H1 (cell line): ENCODE measurements at regions of chr9 and their contacts with region 1.

Region 1: GRCh38 chr9:123401879-123402513 is 46.0 kb downstream of the CRB2 start:
- DNase-seq: no peak
- H3K4me3 ChIP-seq: no peak overlapping the region
- H3K27ac ChIP-seq: no peak overlapping the region
- H3K4me1 ChIP-seq: peaks cover 0 to 11% (median 9%) of the 10 kb centered on the region in 4 experiments; a peak in 6 of 7 replicates
- H3K27me3 ChIP-seq: no peaks in the 10 kb centered on the region; a peak in 1 of 7 replicates
- CTCF ChIP-seq: peak; percentile 57 to 90 (median 73)
- EP300 ChIP-seq: no peak
- POLR2A ChIP-seq: no peak
- RAD21 ChIP-seq: peak; percentile 89 to 93

Region 2: GRCh38 chr9:123389070-123389469 is 12.9 kb before region 1 on chr9:
- CTCF ChIA-PET with region 1: interaction called, 14 read pairs
- POLR2A ChIA-PET with region 1: interaction called, 3 read pairs
- DNase-seq: no peak
- H3K4me3 ChIP-seq: no peak overlapping the region
- H3K27ac ChIP-seq: no peak overlapping the region
- H3K4me1 ChIP-seq: peaks cover 0 to 8% (median 5%) of the 10 kb centered on the region in 4 experiments; a peak in 5 of 7 replicates
- H3K27me3 ChIP-seq: no peaks in the 10 kb centered on the region; a peak in 1 of 7 replicates
- CTCF ChIP-seq: no peak
- EP300 ChIP-seq: no peak
- POLR2A ChIP-seq: no peak
- RAD21 ChIP-seq: no peak

Region 3: GRCh38 chr9:123420592-123421111 is 18.7 kb after region 1 on chr9:
- CTCF ChIA-PET with region 1: interaction called, 15 read pairs
- POLR2A ChIA-PET with region 1: no interaction called
- DNase-seq: no peak
- H3K4me3 ChIP-seq: no peak overlapping the region
- H3K27ac ChIP-seq: no peak overlapping the region
- H3K4me1 ChIP-seq: peaks cover 5 to 14% (median 11%) of the 10 kb centered on the region in 4 experiments
- H3K27me3 ChIP-seq: no peaks in the 10 kb centered on the region
- CTCF ChIP-seq: no peak
- EP300 ChIP-seq: no peak
- POLR2A ChIP-seq: no peak
- RAD21 ChIP-seq: no peak

Region 4: GRCh38 chr9:123434619-123435528 is 32.9 kb after region 1 on chr9:
- CTCF ChIA-PET with region 1: interaction called, 17 read pairs
- POLR2A ChIA-PET with region 1: interaction called, 5 read pairs
- DNase-seq: peak; percentile 33 to 67
- H3K4me3 ChIP-seq: no peak overlapping the region
- H3K27ac ChIP-seq: no peak overlapping the region
- H3K4me1 ChIP-seq: peaks cover 0 to 8% (median 2%) of the 10 kb centered on the region in 4 experiments; a peak in 4 of 7 replicates
- H3K27me3 ChIP-seq: no peaks in the 10 kb centered on the region; a peak in 1 of 7 replicates
- CTCF ChIP-seq: peak; percentile 57 to 70 (median 67)
- EP300 ChIP-seq: no peak
- POLR2A ChIP-seq: no peak
- RAD21 ChIP-seq: peak; percentile 51 to 60

Region 5: DNA sequence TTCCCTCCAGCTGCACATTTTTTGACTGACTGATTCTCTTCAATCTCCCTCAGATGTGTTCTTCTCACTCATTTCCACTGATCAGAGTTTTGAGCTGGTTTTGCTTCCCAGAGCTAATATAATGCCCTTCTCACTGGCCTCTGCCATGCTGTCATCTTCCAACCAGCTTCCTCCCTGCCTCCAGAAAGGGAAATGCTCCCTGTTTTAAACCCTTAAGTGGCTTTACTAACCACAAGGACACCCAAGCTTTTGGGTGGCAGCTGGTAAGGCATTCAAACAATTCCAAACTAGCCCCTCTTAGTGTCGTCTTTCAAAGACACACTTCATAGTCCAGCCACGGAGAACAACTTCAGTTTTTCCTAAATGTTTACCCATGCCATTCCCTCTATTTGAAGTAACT is 126.5 kb after region 1 on chr9:
- CTCF ChIA-PET with region 1: interaction called, 11 read pairs
- POLR2A ChIA-PET with region 1: no interaction called
- DNase-seq: no peak
- H3K4me3 ChIP-seq: no peak overlapping the region
- H3K27ac ChIP-seq: no peak overlapping the region
- H3K4me1 ChIP-seq: no peaks in the 10 kb centered on the region; a peak in 1 of 7 replicates
- H3K27me3 ChIP-seq: no peaks in the 10 kb centered on the region
- CTCF ChIP-seq: no peak
- EP300 ChIP-seq: no peak
- POLR2A ChIP-seq: no peak
- RAD21 ChIP-seq: no peak

Region 6: GRCh38 chr9:124040935-124041816 is 639.2 kb after region 1 on chr9:
- CTCF ChIA-PET with region 1: interaction called, 11 read pairs
- POLR2A ChIA-PET with region 1: no interaction called
- DNase-seq: peak in 1 of 2 experiments; percentile 93
- H3K4me3 ChIP-seq: peak overlapping the region; percentile 16 to 61 (median 32); a peak in 7 of 8 replicates
- H3K27ac ChIP-seq: no peak overlapping the region
- H3K4me1 ChIP-seq: peaks cover 0 to 5% (median 3%) of the 10 kb centered on the region in 4 experiments; a peak in 3 of 7 replicates
- H3K27me3 ChIP-seq: peaks cover 12 to 62% (median 49%) of the 10 kb centered on the region in 4 experiments
- CTCF ChIP-seq: peak; percentile 81 to 89 (median 88)
- EP300 ChIP-seq: no peak; a peak in 1 of 3 replicates
- POLR2A ChIP-seq: no peak
- RAD21 ChIP-seq: peak; percentile 70 to 84